ENCODE measurements at regions of chr2 and their contacts with region 1.

Region 1: DNA sequence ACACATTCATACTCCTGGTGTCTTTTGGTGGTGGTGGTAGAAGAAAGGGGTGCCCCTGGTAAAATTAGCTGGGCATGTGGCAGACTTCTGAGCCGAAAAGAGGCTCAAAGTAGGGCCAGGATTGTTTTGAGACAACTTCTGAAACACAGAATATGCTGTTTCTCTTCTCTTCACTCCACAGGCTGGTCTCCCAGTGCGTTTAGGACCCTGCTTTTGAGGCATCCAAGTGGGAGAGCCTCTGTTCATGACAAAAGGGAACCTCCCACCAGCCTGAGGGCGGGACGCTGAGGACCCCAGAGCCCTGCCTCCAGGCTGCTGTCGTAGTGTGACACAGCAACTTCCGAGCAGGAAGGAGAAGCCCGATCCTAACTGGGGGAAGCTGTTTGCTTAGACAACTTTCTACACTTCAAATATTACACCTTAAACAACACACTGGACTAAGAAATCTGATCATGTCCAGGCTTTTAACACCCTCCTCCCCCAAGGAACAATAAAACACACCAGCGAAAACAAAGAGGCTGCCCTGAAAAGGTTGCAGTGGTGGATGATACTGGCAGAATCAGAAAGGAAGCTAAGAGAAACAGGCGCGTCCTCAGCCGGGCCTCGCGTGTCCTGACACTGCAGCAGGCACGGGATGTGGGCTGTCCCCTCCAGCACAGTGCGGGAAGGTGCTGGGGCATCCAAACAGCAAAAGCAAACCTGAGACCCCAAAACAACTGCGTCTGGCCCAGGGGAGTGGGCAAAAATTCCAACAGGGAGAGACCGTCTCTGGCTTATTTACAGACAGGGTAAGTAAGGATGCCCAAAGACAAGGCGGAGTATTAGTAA is 9.3 kb downstream of the SERTAD2 start:
- DNase-seq: peak in 10 of 14 experiments; percentile 26 to 68 (median 44)
- ATAC-seq: peak; percentile 75
- H3K4me3 ChIP-seq: peak overlapping the region; percentile 40
- H3K4me3 Mint-ChIP-seq: peak overlapping the region; percentile 90
- H3K27ac ChIP-seq: peak overlapping the region in 1 of 2 donors; percentile 24
- H3K27ac Mint-ChIP-seq: peak overlapping the region; percentile 73
- H3K4me1 ChIP-seq: peaks cover 37% of the 10 kb centered on the region
- H3K4me1 Mint-ChIP-seq: peaks cover 93% of the 10 kb centered on the region
- H3K27me3 ChIP-seq: no peaks in the 10 kb centered on the region
- H3K27me3 Mint-ChIP-seq: no peaks in the 10 kb centered on the region
- CTCF ChIP-seq: no peak

Region 2: DNA sequence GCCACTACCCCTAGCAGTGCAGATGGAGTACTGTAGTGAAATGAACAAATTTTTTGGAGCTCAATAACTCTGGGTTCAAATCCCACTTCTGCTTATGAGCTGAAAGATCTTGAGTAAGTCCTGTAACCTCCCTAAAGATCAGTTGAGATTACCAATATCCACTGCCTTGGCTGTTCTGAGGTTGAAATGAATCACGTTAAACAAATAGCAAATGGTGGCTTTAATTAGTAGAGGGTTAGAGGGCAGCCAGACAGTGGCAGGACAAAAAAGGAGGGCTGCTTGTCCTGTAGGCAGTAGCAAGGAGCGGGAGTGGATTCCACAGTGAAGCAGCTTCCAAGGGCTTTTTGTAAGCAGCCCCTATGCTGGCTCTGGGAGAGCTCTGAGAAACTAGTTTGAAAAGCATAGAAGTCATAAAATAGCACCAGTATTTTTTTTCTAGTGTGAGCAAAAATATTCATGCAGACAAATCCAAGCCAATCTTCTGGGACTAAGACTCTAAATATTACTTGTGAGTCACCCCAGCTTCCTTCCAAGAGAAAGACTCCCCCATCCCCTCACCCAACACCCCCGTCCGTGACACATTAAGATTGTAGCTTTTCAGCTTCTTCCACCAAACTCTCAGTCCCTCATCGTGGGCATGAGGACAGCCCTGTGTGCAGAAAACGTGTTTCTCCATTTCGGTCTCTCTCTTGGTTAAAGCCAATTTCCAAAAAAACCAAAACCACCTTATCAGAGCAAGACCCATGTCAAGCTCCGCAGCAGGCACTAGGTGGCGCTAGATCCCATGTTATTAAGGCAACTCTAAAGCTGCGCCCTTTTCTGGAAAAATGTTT is 313.9 kb before region 1 on chr2:
- CTCF ChIA-PET with region 1: no interaction called
- POLR2A ChIA-PET with region 1: interaction called, 4 read pairs
- intact Hi-C with region 1: loop called in 1 of 2 experiments (anchors 5 kb)
- DNase-seq: peak; percentile 63 to 92 (median 74)
- ATAC-seq: peak; percentile 24
- H3K4me3 ChIP-seq: no peak overlapping the region
- H3K4me3 Mint-ChIP-seq: peak overlapping the region; percentile 81
- H3K27ac ChIP-seq: no peak overlapping the region
- H3K27ac Mint-ChIP-seq: peak overlapping the region; percentile 50
- H3K4me1 ChIP-seq: peaks cover 36% of the 10 kb centered on the region
- H3K4me1 Mint-ChIP-seq: peaks cover 38% of the 10 kb centered on the region
- H3K27me3 ChIP-seq: no peaks in the 10 kb centered on the region
- H3K27me3 Mint-ChIP-seq: no peaks in the 10 kb centered on the region
- CTCF ChIP-seq: peak; percentile 86

Region 3: DNA sequence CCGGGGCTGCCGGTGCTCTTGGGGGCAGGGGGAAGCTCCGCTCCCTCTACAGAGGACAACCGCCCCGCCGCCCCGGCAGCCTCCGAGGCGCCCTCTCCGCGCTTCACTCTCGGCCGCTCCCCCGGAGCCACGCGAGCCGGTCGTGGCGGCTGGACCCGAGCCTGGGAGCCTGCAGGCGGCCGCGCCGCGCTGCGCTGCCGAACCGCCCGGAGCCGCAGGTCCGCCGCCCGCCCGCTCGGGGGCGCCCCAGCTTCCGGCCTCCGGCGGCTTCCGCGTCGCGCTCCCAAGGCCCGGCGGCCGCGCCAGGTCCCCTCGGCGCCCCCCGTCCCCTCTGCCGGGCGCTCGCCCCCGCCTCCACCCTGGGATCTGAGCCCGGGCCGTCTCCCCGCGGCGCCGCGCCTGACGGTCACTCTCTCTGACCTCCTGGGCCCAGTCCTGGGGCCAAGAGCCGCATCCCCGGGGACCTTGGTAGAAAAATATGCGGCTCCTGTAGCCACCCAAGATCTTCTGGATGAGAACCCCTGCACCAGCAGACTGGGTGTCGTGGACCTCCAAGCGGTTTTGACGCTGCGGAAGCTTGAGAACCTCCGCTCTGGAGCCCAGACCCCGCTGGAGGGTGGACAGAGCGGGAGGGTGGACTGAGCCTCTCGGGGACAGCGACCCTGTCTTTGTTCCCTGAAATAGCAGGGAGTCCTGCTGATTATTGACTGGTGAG is 35.0 kb before region 1 on chr2:
- CTCF ChIA-PET with region 1: interaction called, 16 read pairs
- POLR2A ChIA-PET with region 1: interaction called, 9 read pairs
- intact Hi-C with region 1: loop called in 1 of 2 experiments (anchors 5 kb)
- DNase-seq: peak; percentile 38 to 89 (median 64)
- ATAC-seq: peak; percentile 64
- H3K4me3 ChIP-seq: peak overlapping the region; percentile 66
- H3K4me3 Mint-ChIP-seq: peak overlapping the region; percentile 89
- H3K27ac ChIP-seq: no peak overlapping the region
- H3K27ac Mint-ChIP-seq: peak overlapping the region; percentile 72
- H3K4me1 ChIP-seq: peaks cover 41% of the 10 kb centered on the region
- H3K4me1 Mint-ChIP-seq: peaks cover 26% of the 10 kb centered on the region
- H3K27me3 ChIP-seq: no peaks in the 10 kb centered on the region
- H3K27me3 Mint-ChIP-seq: no peaks in the 10 kb centered on the region
- CTCF ChIP-seq: no peak

Region 4: DNA sequence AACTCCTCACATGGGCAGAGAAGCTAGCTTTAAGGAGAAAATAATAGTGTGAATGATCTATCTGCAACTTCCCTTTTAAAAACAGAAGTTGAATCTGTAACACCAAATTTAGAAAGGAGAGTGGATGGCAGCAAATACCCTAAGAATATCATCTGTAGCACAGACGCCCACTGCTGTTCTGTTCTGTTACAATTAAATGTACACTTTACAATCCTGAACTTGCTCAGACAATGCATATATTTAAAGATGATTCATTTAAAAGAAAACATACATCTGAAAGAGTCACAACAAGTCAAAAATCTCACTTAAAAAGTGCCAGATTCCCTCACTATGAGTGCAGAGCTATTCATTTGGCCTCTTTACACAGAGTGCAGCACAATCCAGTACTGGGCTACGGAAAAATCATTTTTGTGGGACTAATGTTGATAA is 17.4 kb after region 1 on chr2:
- CTCF ChIA-PET with region 1: interaction called, 49 read pairs
- POLR2A ChIA-PET with region 1: interaction called, 243 read pairs
- intact Hi-C with region 1: no loop called
- DNase-seq: no peak
- ATAC-seq: no peak
- H3K4me3 ChIP-seq: no peak overlapping the region
- H3K4me3 Mint-ChIP-seq: no peak overlapping the region
- H3K27ac ChIP-seq: no peak overlapping the region
- H3K27ac Mint-ChIP-seq: peak overlapping the region; percentile 82
- H3K4me1 ChIP-seq: peaks cover 24% of the 10 kb centered on the region
- H3K4me1 Mint-ChIP-seq: peaks cover 76% of the 10 kb centered on the region
- H3K27me3 ChIP-seq: no peaks in the 10 kb centered on the region
- H3K27me3 Mint-ChIP-seq: no peaks in the 10 kb centered on the region
- CTCF ChIP-seq: no peak

Region 5: GRCh38 chr2:64730551-64731262 is 86.3 kb after region 1 on chr2:
- CTCF ChIA-PET with region 1: interaction called, 4 read pairs
- POLR2A ChIA-PET with region 1: interaction called, 7 read pairs
- intact Hi-C with region 1: loop called in 1 of 2 experiments (anchors 1 kb)
- DNase-seq: peak; percentile 12 to 77 (median 36)
- ATAC-seq: peak; percentile 78
- H3K4me3 ChIP-seq: peak overlapping the region; percentile 63
- H3K4me3 Mint-ChIP-seq: peak overlapping the region; percentile 88
- H3K27ac ChIP-seq: peak overlapping the region; percentile 71 to 86
- H3K27ac Mint-ChIP-seq: peak overlapping the region; percentile 98
- H3K4me1 ChIP-seq: peaks cover 22% of the 10 kb centered on the region
- H3K4me1 Mint-ChIP-seq: peaks cover 67% of the 10 kb centered on the region
- H3K27me3 ChIP-seq: no peaks in the 10 kb centered on the region
- H3K27me3 Mint-ChIP-seq: no peaks in the 10 kb centered on the region
- CTCF ChIP-seq: no peak

Region 6: DNA sequence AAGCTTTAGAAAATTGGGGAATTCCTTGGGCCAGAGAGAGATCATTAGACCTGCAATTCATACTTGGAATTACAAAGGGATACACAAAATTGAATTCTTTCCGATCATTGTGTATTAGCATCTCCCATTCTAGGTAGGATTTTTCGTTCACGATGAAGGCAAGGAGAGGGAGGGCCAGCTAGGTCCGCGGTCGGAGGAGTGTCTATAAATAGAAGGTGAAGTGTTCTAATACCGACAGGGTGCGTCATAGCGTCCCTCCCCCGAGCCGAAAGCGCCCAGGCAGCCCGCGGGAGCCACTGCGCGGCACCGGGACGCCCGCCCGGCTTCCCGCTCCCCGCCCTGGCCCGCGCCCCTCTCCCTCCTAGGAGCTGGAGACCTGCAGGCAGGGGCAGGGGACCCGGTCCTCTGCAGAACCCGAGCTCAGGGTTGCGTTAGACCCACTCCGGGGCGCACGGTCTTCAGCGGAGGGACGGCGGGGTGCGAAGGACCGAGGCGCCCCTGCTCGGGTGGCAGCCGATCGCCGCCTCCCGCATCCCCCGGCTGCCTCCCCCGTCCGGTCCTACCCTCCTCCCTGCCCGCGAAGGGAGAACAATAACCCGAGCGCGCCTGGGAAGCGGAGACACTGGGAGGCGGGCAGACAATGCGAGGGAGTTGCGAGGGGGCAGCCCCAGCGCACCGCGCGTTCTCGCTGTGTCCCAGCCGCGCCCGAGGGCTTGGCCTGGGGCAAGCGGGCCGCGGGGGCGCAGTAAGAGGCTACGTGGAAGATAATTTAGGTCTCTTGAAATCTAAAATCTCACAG is 123.5 kb after region 1 on chr2:
- CTCF ChIA-PET with region 1: interaction called, 11 read pairs
- POLR2A ChIA-PET with region 1: interaction called, 9 read pairs
- intact Hi-C with region 1: loop called in 1 of 2 experiments (anchors 1 kb)
- DNase-seq: peak; percentile 36 to 93 (median 62)
- ATAC-seq: peak; percentile 74
- H3K4me3 ChIP-seq: peak overlapping the region; percentile 63
- H3K4me3 Mint-ChIP-seq: peak overlapping the region; percentile 93
- H3K27ac ChIP-seq: peak overlapping the region; percentile 82 to 85
- H3K27ac Mint-ChIP-seq: peak overlapping the region; percentile 81
- H3K4me1 ChIP-seq: peaks cover 6% of the 10 kb centered on the region
- H3K4me1 Mint-ChIP-seq: peaks cover 22% of the 10 kb centered on the region
- H3K27me3 ChIP-seq: no peaks in the 10 kb centered on the region
- H3K27me3 Mint-ChIP-seq: no peaks in the 10 kb centered on the region
- CTCF ChIP-seq: peak; percentile 37

Region 7: GRCh38 chr2:64865073-64865830 is 220.9 kb after region 1 on chr2:
- CTCF ChIA-PET with region 1: interaction called, 15 read pairs
- POLR2A ChIA-PET with region 1: no interaction called
- intact Hi-C with region 1: loop called (anchors 1 kb)
- DNase-seq: peak; percentile 32 to 85 (median 58)
- ATAC-seq: peak; percentile 94
- H3K4me3 ChIP-seq: peak overlapping the region; percentile 62
- H3K4me3 Mint-ChIP-seq: peak overlapping the region; percentile 78
- H3K27ac ChIP-seq: no peak overlapping the region
- H3K27ac Mint-ChIP-seq: no peak overlapping the region
- H3K4me1 ChIP-seq: peaks cover 18% of the 10 kb centered on the region
- H3K4me1 Mint-ChIP-seq: no peaks in the 10 kb centered on the region
- H3K27me3 ChIP-seq: peaks cover 0 to 3% of the 10 kb centered on the region in 2 experiments
- H3K27me3 Mint-ChIP-seq: peaks cover 5% of the 10 kb centered on the region
- CTCF ChIP-seq: no peak

Region 8: DNA sequence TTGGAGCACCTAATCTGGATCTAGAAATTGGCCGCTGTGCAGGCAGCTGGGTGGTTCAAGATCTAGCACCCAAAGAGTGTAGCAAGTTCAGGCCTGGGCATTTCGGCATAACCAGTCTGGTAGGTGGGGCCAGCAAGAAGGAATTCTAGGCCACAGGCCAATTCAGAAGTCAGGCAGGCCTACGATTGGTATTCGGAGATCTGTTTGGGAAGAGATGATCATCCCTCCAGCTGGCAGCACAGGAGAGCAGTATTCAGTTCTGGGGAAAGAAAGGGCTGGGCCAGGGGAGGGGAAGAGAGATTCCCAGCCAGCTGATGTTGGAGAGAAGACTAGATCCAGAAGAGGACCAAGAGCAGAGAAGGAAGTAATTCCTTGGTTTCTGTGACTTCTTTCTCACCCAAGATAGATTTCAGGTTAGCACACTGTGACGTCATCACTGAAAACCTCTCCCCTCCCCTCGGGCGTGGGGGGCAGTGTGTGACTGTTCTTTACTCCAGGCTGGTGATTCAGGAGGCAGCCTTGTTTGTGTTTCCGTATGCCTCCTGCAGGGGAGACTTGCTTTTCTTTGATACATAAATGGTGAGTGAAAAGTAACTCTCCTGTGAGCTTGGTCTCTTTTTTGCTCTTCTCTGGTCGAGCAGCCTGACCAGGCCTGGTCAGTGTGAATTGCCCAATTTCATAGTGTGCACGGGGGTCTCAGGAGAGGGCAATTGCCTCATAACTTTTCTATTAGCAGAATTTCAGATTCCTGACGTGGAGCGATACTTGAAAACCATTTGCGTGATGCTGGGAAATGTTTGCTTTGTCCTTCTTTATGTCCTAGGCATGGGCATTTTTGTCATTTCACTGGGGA is 1851.6 kb after region 1 on chr2:
- CTCF ChIA-PET with region 1: no interaction called
- POLR2A ChIA-PET with region 1: no interaction called
- intact Hi-C with region 1: no loop called
- DNase-seq: no peak
- ATAC-seq: no peak
- H3K4me3 ChIP-seq: no peak overlapping the region
- H3K4me3 Mint-ChIP-seq: no peak overlapping the region
- H3K27ac ChIP-seq: no peak overlapping the region
- H3K27ac Mint-ChIP-seq: no peak overlapping the region
- H3K4me1 ChIP-seq: no peaks in the 10 kb centered on the region
- H3K4me1 Mint-ChIP-seq: no peaks in the 10 kb centered on the region
- H3K27me3 ChIP-seq: no peaks in the 10 kb centered on the region
- H3K27me3 Mint-ChIP-seq: peaks cover 12% of the 10 kb centered on the region
- CTCF ChIP-seq: no peak

Measured in CD4-positive, alpha-beta T cell (primary cell).